CD4-positive, alpha-beta memory T cell (primary cell): ENCODE measurements at regions of chr5 and their contacts with region 1.

Region 1: DNA sequence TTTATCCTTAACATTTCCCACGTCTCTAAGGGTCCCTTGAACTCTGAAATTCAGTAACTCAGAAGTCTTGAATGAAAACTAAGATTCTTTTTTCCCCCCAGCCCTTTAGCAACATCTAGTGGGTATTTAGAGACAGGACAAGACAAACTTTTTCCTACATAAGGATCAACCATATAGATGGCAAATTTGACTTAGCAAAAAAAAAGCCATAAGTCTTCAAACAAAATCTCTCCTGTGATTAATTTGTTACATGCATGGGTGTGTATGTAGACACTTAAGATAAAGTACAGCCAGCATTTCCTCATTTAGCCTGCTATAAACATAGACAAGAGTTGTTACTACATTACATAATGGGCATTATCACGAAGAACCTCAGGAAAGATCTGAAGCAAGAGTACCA is 29.1 kb upstream of the ANKRD31 start:
- DNase-seq: peak in 4 of 5 donors; percentile 36 to 52 (median 38)
- H3K4me3 ChIP-seq: no peak overlapping the region
- H3K4me3 Mint-ChIP-seq: no peak overlapping the region
- H3K27ac ChIP-seq: no peak overlapping the region
- H3K27ac Mint-ChIP-seq: no peak overlapping the region
- H3K4me1 ChIP-seq: no peaks in the 10 kb centered on the region
- H3K4me1 Mint-ChIP-seq: peaks cover 0 to 2% (median under 1%) of the 10 kb centered on the region in 4 donors
- H3K27me3 ChIP-seq: no peaks in the 10 kb centered on the region
- H3K27me3 Mint-ChIP-seq: peaks cover 1 to 7% of the 10 kb centered on the region in 2 donors

Region 2: GRCh38 chr5:74673011-74673790 is 592.5 kb before region 1 on chr5:
- CTCF ChIA-PET with region 1: interaction called, 4 read pairs
- POLR2A ChIA-PET with region 1: no interaction called
- intact Hi-C with region 1: loop called (anchors 2 kb)
- DNase-seq: peak in 2 of 5 donors; percentile 18 to 26
- H3K4me3 ChIP-seq: no peak overlapping the region
- H3K4me3 Mint-ChIP-seq: no peak overlapping the region
- H3K27ac ChIP-seq: no peak overlapping the region
- H3K27ac Mint-ChIP-seq: peak overlapping the region in 1 of 7 donors; percentile 22
- H3K4me1 ChIP-seq: no peaks in the 10 kb centered on the region
- H3K4me1 Mint-ChIP-seq: no peaks in the 10 kb centered on the region
- H3K27me3 ChIP-seq: no peaks in the 10 kb centered on the region
- H3K27me3 Mint-ChIP-seq: peaks cover 7 to 14% of the 10 kb centered on the region in 2 donors

Region 3: DNA sequence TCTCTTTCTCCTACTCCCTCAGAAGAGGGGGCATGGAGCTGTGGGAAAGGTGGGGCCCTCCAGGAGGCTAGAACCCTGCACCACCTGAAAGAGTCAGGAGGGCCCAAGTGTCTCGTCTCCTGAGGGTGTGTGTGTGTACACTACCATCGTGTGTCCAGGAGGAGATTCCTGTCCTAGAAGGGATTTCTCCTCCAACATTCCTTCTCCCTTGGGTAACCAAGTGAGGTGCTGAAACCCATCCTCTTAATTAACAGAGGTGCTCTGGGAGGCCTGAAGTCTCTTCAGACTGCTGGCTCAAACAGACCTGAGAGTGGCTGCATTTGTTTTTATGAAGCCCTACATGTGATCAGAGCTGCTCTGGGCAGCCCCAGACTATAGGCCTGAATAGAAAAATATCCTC is 338.4 kb before region 1 on chr5:
- CTCF ChIA-PET with region 1: interaction called, 5 read pairs
- POLR2A ChIA-PET with region 1: no interaction called
- intact Hi-C with region 1: loop called (anchors 1 kb)
- DNase-seq: no peak
- H3K4me3 ChIP-seq: no peak overlapping the region
- H3K4me3 Mint-ChIP-seq: no peak overlapping the region
- H3K27ac ChIP-seq: no peak overlapping the region
- H3K27ac Mint-ChIP-seq: no peak overlapping the region
- H3K4me1 ChIP-seq: no peaks in the 10 kb centered on the region
- H3K4me1 Mint-ChIP-seq: peaks cover 0 to 3% (median 0%) of the 10 kb centered on the region in 4 donors
- H3K27me3 ChIP-seq: no peaks in the 10 kb centered on the region
- H3K27me3 Mint-ChIP-seq: no peaks in the 10 kb centered on the region

Region 4: DNA sequence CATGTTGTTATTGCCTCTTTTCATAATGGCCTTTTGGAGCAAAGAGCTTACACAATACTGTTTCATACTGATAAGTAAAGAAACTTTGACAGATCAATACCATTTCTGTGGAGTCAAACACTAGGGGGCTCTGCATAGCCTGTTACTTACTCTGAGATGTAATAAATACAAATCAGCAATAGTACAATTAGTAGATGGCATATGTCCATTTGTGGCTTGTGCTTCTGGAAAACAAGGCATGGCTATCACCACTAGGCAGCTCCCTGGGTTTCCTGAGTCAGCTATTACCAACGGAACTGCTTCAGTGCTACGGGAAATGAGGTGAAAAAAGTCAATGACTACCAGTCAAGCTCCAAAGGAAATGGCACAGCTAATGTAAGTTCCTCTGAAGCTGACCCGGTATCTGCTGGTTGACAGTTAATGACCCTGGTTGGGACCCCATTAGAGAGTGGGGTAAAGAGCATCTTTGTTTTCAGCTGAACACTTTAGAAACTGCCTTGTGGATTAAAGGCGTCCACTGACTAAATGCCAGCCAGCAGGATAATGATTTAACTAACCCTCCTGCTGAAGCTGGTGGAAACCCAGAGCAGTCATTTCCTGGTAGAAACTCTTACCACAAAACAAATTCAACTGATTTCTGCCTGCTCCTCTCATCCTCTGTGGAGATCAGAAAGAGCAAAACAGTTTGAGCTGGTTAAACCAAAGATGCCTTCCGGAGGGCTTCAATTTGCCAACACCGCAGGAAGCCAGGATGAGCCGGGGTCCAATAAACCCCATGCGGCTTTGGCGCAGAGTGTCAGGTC is 330.6 kb before region 1 on chr5:
- CTCF ChIA-PET with region 1: interaction called, 9 read pairs
- POLR2A ChIA-PET with region 1: no interaction called
- intact Hi-C with region 1: loop called (anchors 1 kb)
- DNase-seq: peak in 4 of 5 donors; percentile 25 to 43 (median 30)
- H3K4me3 ChIP-seq: peak overlapping the region; percentile 2 to 8
- H3K4me3 Mint-ChIP-seq: peak overlapping the region; percentile 65 to 82 (median 74)
- H3K27ac ChIP-seq: peak overlapping the region; percentile 17
- H3K27ac Mint-ChIP-seq: peak overlapping the region; percentile 30 to 92 (median 64)
- H3K4me1 ChIP-seq: peaks cover 19% of the 10 kb centered on the region
- H3K4me1 Mint-ChIP-seq: peaks cover 16 to 30% (median 27%) of the 10 kb centered on the region in 4 donors
- H3K27me3 ChIP-seq: no peaks in the 10 kb centered on the region
- H3K27me3 Mint-ChIP-seq: no peaks in the 10 kb centered on the region

Region 5: DNA sequence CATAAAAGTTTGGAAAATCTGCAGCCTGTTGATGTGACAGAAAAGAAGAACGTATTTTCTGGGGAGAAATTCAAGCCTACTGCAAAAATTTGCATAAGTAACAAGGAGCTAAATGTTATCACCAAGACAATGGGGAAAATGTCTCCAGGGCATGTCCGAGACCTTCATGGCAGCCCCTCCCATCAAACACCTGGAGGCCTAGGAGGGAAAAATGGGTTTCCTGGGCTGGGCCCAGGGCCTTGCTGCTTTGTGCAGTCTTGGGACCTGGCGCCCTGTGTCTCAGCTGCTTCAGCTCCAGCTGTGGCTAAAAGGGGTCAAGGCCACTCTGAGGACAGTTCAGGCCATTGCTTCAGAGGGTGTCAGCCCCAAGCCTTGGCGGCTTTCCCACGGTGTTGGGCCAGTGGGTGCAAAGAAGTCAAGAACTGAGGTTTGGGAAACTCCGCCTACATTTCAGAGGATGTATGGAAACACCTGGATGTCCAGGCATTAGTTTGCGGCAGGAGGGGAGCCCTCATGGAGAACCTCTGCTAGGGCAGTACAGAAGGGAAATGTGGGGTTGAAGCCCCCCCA is 232.6 kb after region 1 on chr5:
- CTCF ChIA-PET with region 1: no interaction called
- POLR2A ChIA-PET with region 1: no interaction called
- intact Hi-C with region 1: no loop called
- DNase-seq: no peak
- H3K4me3 ChIP-seq: no peak overlapping the region
- H3K4me3 Mint-ChIP-seq: no peak overlapping the region
- H3K27ac ChIP-seq: no peak overlapping the region
- H3K27ac Mint-ChIP-seq: no peak overlapping the region
- H3K4me1 ChIP-seq: no peaks in the 10 kb centered on the region
- H3K4me1 Mint-ChIP-seq: peaks cover 6 to 27% (median 19%) of the 10 kb centered on the region in 4 donors
- H3K27me3 ChIP-seq: no peaks in the 10 kb centered on the region
- H3K27me3 Mint-ChIP-seq: no peaks in the 10 kb centered on the region